A549 (cell line): ENCODE measurements at regions of chr19 and their contacts with region 1.

Region 1: GRCh38 chr19:39328046-39328705 is 7.5 kb upstream of the LRFN1 start:
- DNase-seq: peak; percentile 83 to 97
- ATAC-seq: peak; percentile 74 to 83
- H3K4me3 ChIP-seq: no peak overlapping the region
- H3K27ac ChIP-seq: peak overlapping the region in 1 of 2 experiments; percentile 19; a peak in 2 of 6 replicates
- H3K4me1 ChIP-seq: peaks cover 10% of the 10 kb centered on the region; the same call in 1 of the 3 replicates
- CTCF ChIP-seq: peak; percentile 100
- EP300 ChIP-seq: no peak
- POLR2A ChIP-seq: no peak
- RAD21 ChIP-seq: peak; percentile 100

Region 2: GRCh38 chr19:38959618-38960017 is 368.6 kb before region 1 on chr19:
- CTCF ChIA-PET with region 1: interaction called, 29 read pairs
- POLR2A ChIA-PET with region 1: interaction called, 3 read pairs
- DNase-seq: no peak
- ATAC-seq: no peak
- H3K4me3 ChIP-seq: no peak overlapping the region
- H3K27ac ChIP-seq: no peak overlapping the region
- H3K4me1 ChIP-seq: peaks cover 11% of the 10 kb centered on the region
- CTCF ChIP-seq: no peak
- EP300 ChIP-seq: no peak
- POLR2A ChIP-seq: no peak
- RAD21 ChIP-seq: no peak

Region 3: GRCh38 chr19:39052243-39052746 is 275.9 kb before region 1 on chr19:
- CTCF ChIA-PET with region 1: interaction called, 51 read pairs
- POLR2A ChIA-PET with region 1: no interaction called
- DNase-seq: peak; percentile 75 to 87
- ATAC-seq: peak; percentile 85 to 96
- H3K4me3 ChIP-seq: no peak overlapping the region
- H3K27ac ChIP-seq: peak overlapping the region; percentile 54 to 71
- H3K4me1 ChIP-seq: peaks cover 22% of the 10 kb centered on the region
- CTCF ChIP-seq: peak; percentile 99
- EP300 ChIP-seq: no peak
- POLR2A ChIP-seq: no peak
- RAD21 ChIP-seq: peak; percentile 98 to 99

Region 4: GRCh38 chr19:39144245-39145071 is 183.7 kb before region 1 on chr19:
- CTCF ChIA-PET with region 1: interaction called, 13 read pairs
- POLR2A ChIA-PET with region 1: no interaction called
- DNase-seq: no peak
- ATAC-seq: peak; percentile 45 to 65
- H3K4me3 ChIP-seq: no peak overlapping the region
- H3K27ac ChIP-seq: peak overlapping the region in 1 of 2 experiments; percentile 53; a peak in 3 of 6 replicates
- H3K4me1 ChIP-seq: peaks cover 30% of the 10 kb centered on the region
- CTCF ChIP-seq: no peak
- EP300 ChIP-seq: no peak
- POLR2A ChIP-seq: no peak
- RAD21 ChIP-seq: no peak

Region 5: GRCh38 chr19:39199025-39199424 is 129.2 kb before region 1 on chr19:
- CTCF ChIA-PET with region 1: interaction called, 44 read pairs
- POLR2A ChIA-PET with region 1: no interaction called
- DNase-seq: no peak
- ATAC-seq: peak in 1 of 2 experiments; percentile 40; a peak in 3 of 6 replicates
- H3K4me3 ChIP-seq: no peak overlapping the region
- H3K27ac ChIP-seq: peak overlapping the region in 1 of 2 experiments; percentile 13; a peak in 2 of 6 replicates
- H3K4me1 ChIP-seq: peaks cover 29% of the 10 kb centered on the region
- CTCF ChIP-seq: no peak
- EP300 ChIP-seq: no peak
- POLR2A ChIP-seq: no peak
- RAD21 ChIP-seq: no peak

Region 6: GRCh38 chr19:39341719-39342604 is 13.8 kb after region 1 on chr19 and contains the start of gene SAMD4B:
- CTCF ChIA-PET with region 1: interaction called, 93 read pairs
- POLR2A ChIA-PET with region 1: interaction called, 4 read pairs
- DNase-seq: peak; percentile 99 to 100
- ATAC-seq: peak; percentile 90 to 97
- H3K4me3 ChIP-seq: peak within 1 kb of the TSS; percentile 90
- H3K27ac ChIP-seq: peak within 1 kb of the TSS; percentile 85 to 94
- H3K4me1 ChIP-seq: peaks cover 22% of the 10 kb centered on the region
- CTCF ChIP-seq: peak; percentile 96
- EP300 ChIP-seq: peak in 1 of 2 experiments; percentile 9; a peak in 1 of 5 replicates
- POLR2A ChIP-seq: peak; percentile 97
- RAD21 ChIP-seq: peak; percentile 31 to 60; a peak in 4 of 5 replicates
- polyA plus RNA-seq, gene SAMD4B: 82.1 and 101 TPM in 2 replicates

Region 7: GRCh38 chr19:39420769-39421168 is 92.6 kb after region 1 on chr19:
- CTCF ChIA-PET with region 1: no interaction called
- POLR2A ChIA-PET with region 1: no interaction called
- DNase-seq: peak in 1 of 2 experiments; percentile 29
- ATAC-seq: peak in 1 of 2 experiments; percentile 5; a peak in 2 of 6 replicates
- H3K4me3 ChIP-seq: no peak overlapping the region
- H3K27ac ChIP-seq: no peak overlapping the region
- H3K4me1 ChIP-seq: no peaks in the 10 kb centered on the region
- CTCF ChIP-seq: no peak
- EP300 ChIP-seq: no peak
- POLR2A ChIP-seq: no peak
- RAD21 ChIP-seq: no peak